ENCODE measurements at regions of chr15 and their contacts with region 1.

Region 1: DNA sequence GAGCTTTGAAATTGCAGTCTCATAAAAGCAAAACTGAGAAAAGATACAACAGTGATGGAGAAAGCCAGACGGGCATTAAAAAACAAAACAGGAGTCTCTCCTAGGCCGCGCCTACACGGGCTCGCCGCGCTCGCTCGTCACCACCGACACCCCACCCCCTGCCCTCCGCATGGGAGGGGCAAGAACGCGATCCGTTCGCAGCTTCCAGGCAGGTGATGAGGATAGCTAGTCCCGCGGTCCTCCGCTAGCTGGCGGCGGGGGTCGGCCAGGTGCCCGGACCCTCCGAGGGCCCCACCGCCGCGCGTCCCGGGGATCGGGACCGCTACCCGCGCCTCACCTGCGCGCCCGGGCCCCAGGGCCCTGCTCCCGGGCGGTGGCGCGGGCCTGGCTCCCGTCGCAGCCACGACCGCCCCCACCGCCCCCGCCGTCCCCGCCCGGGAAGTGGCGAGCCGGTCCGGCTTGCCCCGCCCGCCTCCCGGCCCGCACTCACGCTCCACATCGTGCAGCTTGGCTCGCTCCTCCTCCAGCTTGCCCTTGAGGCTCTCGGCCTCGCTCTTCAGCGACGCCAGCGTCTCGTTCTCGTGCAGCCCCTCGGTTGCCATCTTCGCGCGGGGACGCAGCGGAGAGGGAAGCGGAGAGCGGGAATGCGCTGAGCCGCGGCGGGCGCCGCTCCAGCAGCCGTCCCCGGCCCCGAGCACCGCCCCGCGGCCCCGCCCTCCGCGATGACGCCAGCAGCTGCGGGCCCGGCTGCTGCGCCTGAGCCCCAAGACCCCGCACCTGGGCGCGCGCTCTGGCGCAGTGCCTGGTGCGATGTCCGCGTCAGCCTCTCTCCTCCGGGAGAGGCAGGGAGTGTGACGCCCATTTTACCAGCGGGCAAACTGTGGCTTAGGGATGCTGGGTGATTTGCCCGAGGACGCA is 11.7 kb downstream of the GNB5 start:
- DNase-seq: peak; percentile 89 to 93 (median 92)
- H3K4me3 ChIP-seq: peak overlapping the region; percentile 31 to 57
- H3K4me3 Mint-ChIP-seq: peak overlapping the region; percentile 93 to 97 (median 95)
- H3K27ac ChIP-seq: peak overlapping the region; percentile 96
- H3K27ac Mint-ChIP-seq: peak overlapping the region; percentile 89 to 99 (median 99)
- H3K4me1 ChIP-seq: peaks cover 26% of the 10 kb centered on the region
- H3K4me1 Mint-ChIP-seq: peaks cover 21 to 52% (median 36%) of the 10 kb centered on the region in 4 donors
- H3K27me3 ChIP-seq: no peaks in the 10 kb centered on the region
- H3K27me3 Mint-ChIP-seq: no peaks in the 10 kb centered on the region

Region 2: DNA sequence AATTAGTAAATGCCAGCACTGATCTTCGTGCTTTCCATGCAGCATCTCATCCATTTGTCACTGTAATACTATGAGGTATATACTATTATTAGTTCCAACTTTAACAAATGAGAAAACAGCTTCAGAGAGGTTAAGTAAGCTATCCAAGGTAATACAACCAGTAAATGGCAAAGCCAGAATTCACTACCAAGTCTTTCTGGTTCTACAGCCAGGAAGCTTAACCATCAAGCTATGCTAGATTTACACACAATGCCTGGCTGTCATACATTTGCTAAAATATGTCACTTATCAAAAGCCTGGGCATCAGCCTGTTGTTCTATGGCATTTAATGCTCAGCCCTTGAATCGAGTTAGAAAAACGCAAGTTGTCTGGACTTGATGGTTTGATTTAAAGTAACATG is 395.6 kb before region 1 on chr15:
- CTCF ChIA-PET with region 1: no interaction called
- POLR2A ChIA-PET with region 1: no interaction called
- intact Hi-C with region 1: no loop called
- DNase-seq: no peak
- H3K4me3 ChIP-seq: no peak overlapping the region
- H3K4me3 Mint-ChIP-seq: no peak overlapping the region
- H3K27ac ChIP-seq: no peak overlapping the region
- H3K27ac Mint-ChIP-seq: no peak overlapping the region
- H3K4me1 ChIP-seq: no peaks in the 10 kb centered on the region
- H3K4me1 Mint-ChIP-seq: peaks cover 0 to 4% (median 0%) of the 10 kb centered on the region in 4 donors
- H3K27me3 ChIP-seq: no peaks in the 10 kb centered on the region
- H3K27me3 Mint-ChIP-seq: no peaks in the 10 kb centered on the region

Region 3: GRCh38 chr15:51971375-51972133 is 208.0 kb before region 1 on chr15 and contains the start of gene LEO1:
- CTCF ChIA-PET with region 1: interaction called, 3 read pairs
- POLR2A ChIA-PET with region 1: interaction called, 27 read pairs
- intact Hi-C with region 1: loop called (anchors 1 kb)
- DNase-seq: peak; percentile 92 to 95 (median 93)
- H3K4me3 ChIP-seq: peak within 1 kb of the TSS; percentile 93 to 96
- H3K4me3 Mint-ChIP-seq: peak within 1 kb of the TSS; percentile 95 to 100 (median 98)
- H3K27ac ChIP-seq: peak within 1 kb of the TSS; percentile 77
- H3K27ac Mint-ChIP-seq: peak within 1 kb of the TSS; percentile 94 to 99 (median 97)
- H3K4me1 ChIP-seq: peaks cover 18% of the 10 kb centered on the region
- H3K4me1 Mint-ChIP-seq: peaks cover 15 to 23% (median 19%) of the 10 kb centered on the region in 4 donors
- H3K27me3 ChIP-seq: no peaks in the 10 kb centered on the region
- H3K27me3 Mint-ChIP-seq: peaks cover 0 to 1% of the 10 kb centered on the region in 2 donors
- total RNA-seq, gene LEO1: 21.7 to 22.2 TPM

Region 4: DNA sequence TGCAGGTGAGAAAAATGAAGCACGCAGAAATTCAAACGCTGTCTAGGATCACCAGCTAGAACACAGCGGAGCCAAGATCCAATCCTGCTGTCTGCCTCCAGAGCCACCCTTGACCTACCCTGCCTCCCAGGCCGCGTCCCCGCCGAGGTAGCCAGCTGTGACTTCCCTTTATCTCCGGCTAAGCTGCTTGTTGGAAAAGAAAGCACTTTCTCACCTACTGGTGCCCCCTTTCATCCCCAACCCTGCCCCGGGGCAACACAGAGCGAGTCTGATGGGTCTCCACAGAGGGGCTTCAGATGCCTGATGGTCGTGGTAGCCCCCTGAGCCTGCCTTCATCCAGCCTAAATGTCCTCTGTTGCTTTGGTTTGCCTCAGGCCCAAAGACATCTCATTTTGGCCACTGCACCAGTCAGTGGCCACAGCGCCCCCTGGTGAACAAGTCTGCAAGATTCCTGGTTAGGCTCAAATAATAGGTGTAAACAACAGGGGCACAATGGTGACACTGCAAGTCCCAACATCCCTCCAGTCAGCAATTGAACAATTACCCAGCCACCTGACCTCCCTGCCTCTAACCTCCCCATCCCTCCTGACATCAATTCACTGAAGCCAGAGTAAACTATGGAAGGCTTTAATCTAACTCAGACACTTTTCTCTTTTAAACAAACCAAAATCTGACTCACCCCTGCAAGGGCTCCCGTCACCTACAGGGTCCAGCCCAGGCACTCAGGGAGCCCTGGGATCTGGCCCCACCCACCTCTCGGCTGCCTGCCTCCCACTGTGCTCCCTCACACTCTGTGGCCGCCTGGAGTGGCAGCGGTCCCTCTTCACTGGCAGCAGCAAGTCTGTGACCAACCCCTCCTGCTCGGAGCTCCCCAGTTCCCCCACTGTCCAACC is 39.7 kb before region 1 on chr15:
- CTCF ChIA-PET with region 1: interaction called, 8 read pairs
- POLR2A ChIA-PET with region 1: interaction called, 12 read pairs
- intact Hi-C with region 1: no loop called
- DNase-seq: peak; percentile 42 to 60 (median 46)
- H3K4me3 ChIP-seq: no peak overlapping the region
- H3K4me3 Mint-ChIP-seq: peak overlapping the region in 1 of 8 donors; percentile 26
- H3K27ac ChIP-seq: no peak overlapping the region
- H3K27ac Mint-ChIP-seq: peak overlapping the region in 4 of 7 donors; percentile 61 to 70 (median 66)
- H3K4me1 ChIP-seq: peaks cover 22% of the 10 kb centered on the region
- H3K4me1 Mint-ChIP-seq: peaks cover 18 to 32% (median 27%) of the 10 kb centered on the region in 4 donors
- H3K27me3 ChIP-seq: no peaks in the 10 kb centered on the region
- H3K27me3 Mint-ChIP-seq: no peaks in the 10 kb centered on the region

Region 5: DNA sequence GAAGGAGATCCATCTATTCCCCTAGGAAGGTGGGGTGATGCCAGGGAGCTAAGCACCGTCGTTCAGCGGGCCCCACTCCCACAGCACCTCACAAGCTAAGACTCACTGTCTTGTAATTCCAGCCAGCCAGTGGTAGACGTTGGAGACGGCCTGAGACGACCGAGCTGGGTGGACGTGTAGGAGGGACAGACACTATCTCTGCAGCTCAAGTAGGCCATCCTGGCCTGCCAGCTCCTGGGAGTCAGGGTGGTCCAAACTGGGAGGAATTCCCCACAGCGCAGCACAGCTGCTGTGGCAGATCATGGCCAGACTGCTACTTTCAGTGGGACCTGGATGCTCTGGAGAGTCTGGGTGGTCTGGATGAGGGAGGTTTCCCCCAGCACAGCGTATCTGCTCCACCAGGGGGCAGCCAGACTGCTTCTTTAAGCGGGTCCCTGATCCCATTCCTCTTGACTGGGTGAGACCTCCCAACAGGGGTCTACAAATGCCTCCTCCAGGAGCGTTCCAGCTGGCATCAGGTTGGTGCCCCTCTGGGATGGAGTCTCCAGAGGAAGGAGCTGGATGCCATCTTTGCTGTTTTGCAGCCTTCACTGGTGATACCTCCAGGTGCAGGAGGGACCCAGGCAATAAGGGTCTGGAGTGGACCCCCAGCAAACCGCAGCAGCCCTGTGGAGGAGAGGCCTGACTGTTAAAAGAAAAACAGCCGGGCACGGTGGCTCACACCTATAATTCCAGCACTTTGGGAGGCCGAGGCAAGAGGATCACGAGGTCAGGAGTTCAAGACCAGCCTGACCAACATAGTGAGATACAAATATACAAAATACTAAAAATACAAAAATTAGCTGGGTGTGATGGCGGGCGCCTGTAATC is 16.0 kb before region 1 on chr15:
- CTCF ChIA-PET with region 1: interaction called, 29 read pairs
- POLR2A ChIA-PET with region 1: interaction called, 22 read pairs
- intact Hi-C with region 1: no loop called
- DNase-seq: no peak
- H3K4me3 ChIP-seq: no peak overlapping the region
- H3K4me3 Mint-ChIP-seq: no peak overlapping the region
- H3K27ac ChIP-seq: no peak overlapping the region
- H3K27ac Mint-ChIP-seq: peak overlapping the region in 1 of 7 donors; percentile 20
- H3K4me1 ChIP-seq: peaks cover 4% of the 10 kb centered on the region
- H3K4me1 Mint-ChIP-seq: peaks cover 29 to 44% (median 36%) of the 10 kb centered on the region in 4 donors
- H3K27me3 ChIP-seq: no peaks in the 10 kb centered on the region
- H3K27me3 Mint-ChIP-seq: no peaks in the 10 kb centered on the region

Region 6: DNA sequence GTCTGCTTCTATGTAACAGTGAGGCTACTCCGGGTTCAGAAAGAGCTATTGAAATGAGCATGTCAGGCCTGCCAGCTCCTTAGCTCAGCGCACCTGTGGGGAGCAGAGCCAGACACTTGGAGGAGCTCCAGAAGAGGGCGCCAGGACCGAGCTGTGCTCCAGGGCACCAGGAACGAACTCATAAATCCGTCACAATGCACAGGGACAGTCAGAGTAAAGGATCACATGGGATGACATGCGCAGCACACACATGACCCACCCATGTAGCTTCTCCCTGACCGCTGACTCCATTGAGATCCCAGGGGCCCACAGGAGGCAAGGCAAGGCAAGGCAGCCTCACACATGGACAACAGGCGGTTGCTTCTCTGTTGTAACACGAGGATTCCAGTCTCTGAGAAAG is 37.6 kb after region 1 on chr15:
- CTCF ChIA-PET with region 1: interaction called, 12 read pairs
- POLR2A ChIA-PET with region 1: interaction called, 60 read pairs
- intact Hi-C with region 1: loop called (anchors 1 kb)
- DNase-seq: no peak
- H3K4me3 ChIP-seq: no peak overlapping the region
- H3K4me3 Mint-ChIP-seq: no peak overlapping the region
- H3K27ac ChIP-seq: no peak overlapping the region
- H3K27ac Mint-ChIP-seq: no peak overlapping the region
- H3K4me1 ChIP-seq: peaks cover 21% of the 10 kb centered on the region
- H3K4me1 Mint-ChIP-seq: peaks cover 13 to 29% (median 19%) of the 10 kb centered on the region in 4 donors
- H3K27me3 ChIP-seq: no peaks in the 10 kb centered on the region
- H3K27me3 Mint-ChIP-seq: peaks cover 0 to 1% of the 10 kb centered on the region in 2 donors

Region 7: GRCh38 chr15:52370010-52370409 is 190.5 kb after region 1 on chr15:
- CTCF ChIA-PET with region 1: no interaction called
- POLR2A ChIA-PET with region 1: no interaction called
- intact Hi-C with region 1: no loop called
- DNase-seq: no peak
- H3K4me3 ChIP-seq: no peak overlapping the region
- H3K4me3 Mint-ChIP-seq: no peak overlapping the region
- H3K27ac ChIP-seq: no peak overlapping the region
- H3K27ac Mint-ChIP-seq: peak overlapping the region in 1 of 7 donors; percentile 12
- H3K4me1 ChIP-seq: no peaks in the 10 kb centered on the region
- H3K4me1 Mint-ChIP-seq: no peaks in the 10 kb centered on the region
- H3K27me3 ChIP-seq: no peaks in the 10 kb centered on the region
- H3K27me3 Mint-ChIP-seq: no peaks in the 10 kb centered on the region

Region 8: GRCh38 chr15:52568601-52569256 is 389.2 kb after region 1 on chr15 and contains the start of gene ARPP19:
- CTCF ChIA-PET with region 1: no interaction called
- POLR2A ChIA-PET with region 1: interaction called, 4 read pairs
- intact Hi-C with region 1: loop called (anchors 2 kb)
- DNase-seq: peak; percentile 78 to 84 (median 80)
- H3K4me3 ChIP-seq: peak within 1 kb of the TSS; percentile 64 to 80
- H3K4me3 Mint-ChIP-seq: peak within 1 kb of the TSS; percentile 94 to 100 (median 96)
- H3K27ac ChIP-seq: peak within 1 kb of the TSS; percentile 98
- H3K27ac Mint-ChIP-seq: peak within 1 kb of the TSS; percentile 98 to 100 (median 100)
- H3K4me1 ChIP-seq: peaks cover 44% of the 10 kb centered on the region
- H3K4me1 Mint-ChIP-seq: peaks cover 31 to 46% (median 38%) of the 10 kb centered on the region in 4 donors
- H3K27me3 ChIP-seq: no peaks in the 10 kb centered on the region
- H3K27me3 Mint-ChIP-seq: no peaks in the 10 kb centered on the region
- total RNA-seq, gene ARPP19: 105 to 130 TPM

Region 9: GRCh38 chr15:52730173-52730572 is 550.6 kb after region 1 on chr15:
- CTCF ChIA-PET with region 1: no interaction called
- POLR2A ChIA-PET with region 1: interaction called, 7 read pairs
- intact Hi-C with region 1: loop called (anchors 5 kb)
- DNase-seq: peak; percentile 57 to 75 (median 73)
- H3K4me3 ChIP-seq: no peak overlapping the region
- H3K4me3 Mint-ChIP-seq: peak overlapping the region in 5 of 8 donors; percentile 16 to 64 (median 41)
- H3K27ac ChIP-seq: no peak overlapping the region
- H3K27ac Mint-ChIP-seq: peak overlapping the region; percentile 51 to 91 (median 80)
- H3K4me1 ChIP-seq: peaks cover 16% of the 10 kb centered on the region
- H3K4me1 Mint-ChIP-seq: peaks cover 8 to 21% (median 14%) of the 10 kb centered on the region in 4 donors
- H3K27me3 ChIP-seq: no peaks in the 10 kb centered on the region
- H3K27me3 Mint-ChIP-seq: peaks cover 0 to 2% of the 10 kb centered on the region in 2 donors